ENCODE measurements at regions of chr4 and their contacts with region 1.

Region 1: DNA sequence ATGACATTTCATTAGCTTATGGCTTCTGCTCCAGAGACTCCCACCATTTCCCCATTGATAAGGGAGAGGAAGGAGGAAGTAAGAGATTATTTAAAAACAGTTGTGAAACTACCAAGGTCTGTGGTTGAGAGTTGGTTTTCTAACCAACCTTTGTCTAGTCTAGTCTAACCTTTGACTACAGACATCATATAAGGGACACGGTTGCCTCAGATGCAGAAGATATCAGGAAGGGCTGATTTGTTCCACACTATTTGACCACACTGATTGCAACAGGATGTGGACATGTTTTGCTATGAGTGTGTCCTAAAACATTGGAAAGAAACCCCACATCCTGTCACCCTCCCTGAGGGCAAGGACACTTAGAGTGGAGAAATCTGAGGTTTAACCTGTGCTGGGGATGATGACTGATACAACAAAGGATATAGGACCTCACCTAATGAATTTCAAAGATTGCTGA is 53.0 kb downstream of the COQ2 start:
- DNase-seq: no peak
- H3K4me3 ChIP-seq: no peak overlapping the region
- H3K27ac ChIP-seq: no peak overlapping the region
- H3K4me1 ChIP-seq: no peaks in the 10 kb centered on the region
- H3K27me3 ChIP-seq: no peaks in the 10 kb centered on the region
- CTCF ChIP-seq: no peak
- POLR2A ChIP-seq: no peak

Region 2: DNA sequence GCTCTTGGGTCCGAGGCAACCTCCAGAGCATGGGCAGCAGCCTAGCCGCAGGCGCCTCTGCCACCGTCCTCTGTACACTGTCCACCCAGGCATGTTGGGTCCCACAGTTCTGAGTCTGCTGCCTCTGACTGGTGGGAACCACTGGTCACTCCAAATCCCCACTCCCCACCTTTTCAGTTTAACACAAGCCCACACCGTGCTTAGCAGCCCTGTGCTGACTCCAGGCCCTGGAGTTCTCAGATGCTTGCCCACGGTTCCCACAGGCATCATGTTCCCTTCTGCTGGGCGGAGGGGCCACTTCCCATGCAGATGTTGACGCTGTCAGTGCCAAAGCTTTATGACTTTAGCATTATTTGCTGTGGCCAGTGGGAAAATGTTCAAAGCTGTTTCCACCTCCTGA is 537.6 kb before region 1 on chr4:
- intact Hi-C with region 1: no loop called
- DNase-seq: no peak
- H3K4me3 ChIP-seq: no peak overlapping the region
- H3K27ac ChIP-seq: no peak overlapping the region
- H3K4me1 ChIP-seq: peaks cover 10 to 15% of the 10 kb centered on the region in 2 donors
- H3K27me3 ChIP-seq: no peaks in the 10 kb centered on the region
- CTCF ChIP-seq: no peak
- POLR2A ChIP-seq: no peak

Region 3: DNA sequence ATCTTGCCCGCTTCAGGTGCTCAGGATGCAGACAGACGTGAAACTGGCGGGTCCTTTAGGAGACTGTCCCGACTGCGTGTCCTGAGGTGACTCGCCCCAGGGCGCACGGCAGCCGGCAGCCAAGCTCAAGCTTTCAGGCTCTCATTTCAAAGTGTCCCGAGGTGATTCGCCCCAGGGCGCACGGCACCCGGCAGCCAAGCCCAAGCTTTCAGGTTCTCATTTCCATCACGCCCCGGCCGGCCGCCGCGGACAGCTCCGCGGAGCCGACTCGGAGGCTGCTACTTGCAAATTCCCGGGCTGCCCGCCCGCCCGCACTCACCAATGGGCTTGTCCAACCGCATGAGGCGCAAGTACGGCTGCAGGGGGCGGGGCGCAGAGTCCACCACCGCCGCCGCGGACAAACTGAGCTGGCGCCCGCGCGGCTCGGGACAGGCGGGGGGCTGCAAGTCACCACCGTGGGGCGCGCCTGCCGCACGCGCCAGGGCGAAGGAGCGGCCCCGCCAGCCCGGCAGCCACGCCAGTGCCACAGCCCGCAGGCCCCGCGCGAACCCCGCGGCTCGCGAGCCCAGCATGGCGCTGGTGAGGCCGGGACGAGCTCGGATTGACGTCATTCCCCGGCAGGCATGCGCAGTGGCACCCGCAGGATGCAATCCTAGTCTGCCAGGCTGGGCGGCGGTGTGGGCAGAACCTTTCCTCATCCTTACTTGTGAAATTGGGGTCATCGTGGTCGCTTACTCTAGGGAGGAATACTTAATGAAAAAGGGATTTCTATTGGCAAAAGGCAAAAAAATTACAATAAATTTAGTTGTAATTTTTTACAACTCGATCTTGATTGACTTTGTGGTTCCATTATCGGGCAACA is 52.8 kb after region 1 on chr4 and contains the start of gene COQ2:
- intact Hi-C with region 1: loop called in 1 of 2 experiments (anchors 5 kb)
- DNase-seq: peak; percentile 96 to 98 (median 98)
- H3K4me3 ChIP-seq: peak within 1 kb of the TSS; percentile 45 to 89 (median 66)
- H3K27ac ChIP-seq: peak within 1 kb of the TSS; percentile 93 to 100 (median 94)
- H3K4me1 ChIP-seq: peaks cover 5 to 30% of the 10 kb centered on the region in 2 donors
- H3K27me3 ChIP-seq: no peaks in the 10 kb centered on the region
- CTCF ChIP-seq: peak in 4 of 6 experiments; percentile 9 to 73 (median 50)
- POLR2A ChIP-seq: peak; percentile 81 to 96
- total RNA-seq, gene COQ2: 25.3 to 73.9 (median 32.4) TPM

Region 4: DNA sequence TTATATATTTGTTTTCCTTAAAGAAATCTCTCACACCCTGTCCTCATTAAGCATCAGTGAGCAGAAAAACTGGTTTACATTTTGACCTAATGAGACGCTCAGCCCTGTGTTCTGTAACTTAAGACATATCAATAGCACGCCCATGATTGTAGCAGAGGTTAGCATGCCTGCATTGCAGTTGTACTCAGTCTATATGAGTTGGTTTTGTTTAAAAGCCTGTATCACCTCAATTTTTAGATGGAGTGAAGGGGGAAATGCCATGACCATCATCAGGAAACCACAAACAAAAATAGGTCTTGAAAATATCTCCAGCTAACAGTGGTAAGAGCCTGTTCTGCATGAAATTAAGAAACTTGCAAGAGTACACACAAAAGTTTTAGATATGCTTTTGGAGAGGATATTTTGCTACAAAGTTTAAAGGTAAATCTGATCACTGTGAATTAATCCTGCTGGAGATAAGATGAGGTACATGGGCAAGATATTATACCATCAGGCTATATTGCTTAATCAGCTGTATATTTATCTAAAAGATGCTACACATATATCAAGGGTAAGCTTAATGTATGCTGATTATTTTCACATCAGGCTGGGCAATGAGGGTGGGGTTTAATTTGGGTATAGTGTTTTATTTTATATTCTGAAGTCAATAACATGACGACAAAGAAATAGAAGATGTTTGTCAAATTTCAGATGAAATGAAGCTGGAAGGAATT is 66.1 kb after region 1 on chr4:
- intact Hi-C with region 1: no loop called
- DNase-seq: no peak
- H3K4me3 ChIP-seq: no peak overlapping the region
- H3K27ac ChIP-seq: no peak overlapping the region
- H3K4me1 ChIP-seq: no peaks in the 10 kb centered on the region
- H3K27me3 ChIP-seq: no peaks in the 10 kb centered on the region
- CTCF ChIP-seq: no peak
- POLR2A ChIP-seq: no peak